ENCODE measurements at regions of chr19 and their contacts with region 1.

Region 1: DNA sequence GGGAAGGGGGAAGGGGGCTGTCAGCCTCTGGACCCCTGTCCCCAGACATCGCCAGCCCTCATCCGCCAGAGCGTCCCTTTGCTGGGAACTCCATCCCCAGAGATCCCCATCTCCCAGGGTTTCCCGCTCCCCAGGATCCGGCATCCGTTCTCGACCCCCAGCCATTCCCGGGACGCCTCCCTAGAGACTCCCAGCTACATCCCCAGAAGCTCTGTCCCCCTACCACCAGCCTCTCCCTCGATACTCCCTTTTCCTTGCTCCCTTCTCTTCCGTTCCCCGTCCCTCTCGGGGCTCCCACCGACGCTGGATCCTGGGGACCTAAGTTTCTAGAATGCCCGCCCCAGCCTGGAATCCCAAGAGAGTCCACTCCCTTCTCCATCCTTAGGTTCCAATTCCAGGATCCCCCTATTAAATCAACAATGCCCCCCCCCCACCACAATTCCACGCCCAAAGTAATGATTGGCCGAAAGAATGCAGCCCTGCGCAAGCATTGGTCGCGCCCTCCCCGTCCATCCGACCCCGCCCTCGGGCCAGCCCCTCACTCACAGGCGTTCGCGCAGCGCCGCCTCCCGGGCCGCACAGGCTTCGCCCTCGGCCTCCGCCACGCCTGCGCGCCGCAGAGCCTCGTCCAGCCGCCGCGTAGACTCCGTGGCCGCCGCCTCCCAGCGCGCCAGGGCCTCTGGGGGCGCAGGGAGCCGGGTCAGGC is 3.2 kb downstream of the CCDC194 start:
- DNase-seq: peak; percentile 88 to 95 (median 94)
- H3K4me3 ChIP-seq: peak overlapping the region in 2 of 4 donors; percentile 20 to 52
- H3K27ac ChIP-seq: peak overlapping the region in 2 of 5 donors; percentile 47
- H3K4me1 ChIP-seq: peaks cover 14 to 34% of the 10 kb centered on the region in 2 donors
- H3K27me3 ChIP-seq: no peaks in the 10 kb centered on the region
- CTCF ChIP-seq: peak; percentile 22 to 93 (median 57)
- POLR2A ChIP-seq: no peak

Region 2: DNA sequence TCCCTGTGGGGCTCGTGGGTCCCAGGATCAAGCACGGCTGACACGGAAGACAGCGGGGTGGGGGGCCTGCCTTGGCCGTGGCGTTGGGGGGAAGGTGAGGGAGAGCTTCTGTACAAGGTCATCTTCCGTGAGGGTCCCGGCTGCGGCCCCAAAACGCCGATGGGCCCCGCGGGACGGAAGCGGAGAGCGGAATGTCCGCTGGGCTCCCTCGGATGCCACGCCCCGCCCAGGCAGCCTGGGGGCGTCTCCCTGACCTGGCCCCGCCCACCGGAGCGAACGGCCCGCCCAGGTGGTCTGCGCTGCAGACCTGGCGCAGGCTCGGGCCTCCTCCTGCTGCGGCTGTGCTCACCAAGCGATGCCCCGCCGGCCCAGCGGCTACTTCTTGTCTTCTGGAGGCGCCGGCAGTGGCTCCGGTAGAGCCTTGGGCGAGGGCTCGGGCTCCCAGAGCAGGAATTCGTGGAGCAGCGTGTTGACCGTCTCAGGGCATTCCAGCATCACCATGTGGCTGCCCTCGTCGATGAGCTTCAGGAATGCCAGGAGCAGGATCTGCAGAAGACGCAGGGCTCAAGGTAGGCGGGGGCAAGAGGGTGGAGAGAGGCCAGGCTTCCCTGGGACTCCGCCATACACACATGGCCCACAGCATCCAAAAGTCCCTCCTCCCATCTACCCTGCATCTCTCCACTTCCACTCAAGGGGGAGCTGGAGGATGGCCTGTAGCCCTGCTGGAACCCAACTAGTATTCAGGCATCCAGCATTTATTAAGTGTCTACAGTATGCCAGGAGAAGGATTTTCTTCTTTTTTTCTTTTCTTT is 98.3 kb before region 1 on chr19:
- intact Hi-C with region 1: loop called in 1 of 2 experiments (anchors 10 kb)
- DNase-seq: peak; percentile 67 to 85 (median 76)
- H3K4me3 ChIP-seq: peak overlapping the region in 2 of 4 donors; percentile 10 to 54
- H3K27ac ChIP-seq: peak overlapping the region in 4 of 5 donors; percentile 3 to 84 (median 49)
- H3K4me1 ChIP-seq: peaks cover 7 to 24% of the 10 kb centered on the region in 2 donors
- H3K27me3 ChIP-seq: no peaks in the 10 kb centered on the region
- CTCF ChIP-seq: peak; percentile 13 to 89 (median 67)
- POLR2A ChIP-seq: no peak

Region 3: GRCh38 chr19:17305517-17306284 is 85.1 kb before region 1 on chr19 and contains the start of gene MRPL34:
- intact Hi-C with region 1: loop called in 1 of 2 experiments (anchors 10 kb)
- DNase-seq: peak; percentile 97 to 99 (median 99)
- H3K4me3 ChIP-seq: peak within 1 kb of the TSS; percentile 24 to 75 (median 67)
- H3K27ac ChIP-seq: peak within 1 kb of the TSS; percentile 81 to 97 (median 90)
- H3K4me1 ChIP-seq: peaks cover 42 to 56% of the 10 kb centered on the region in 2 donors
- H3K27me3 ChIP-seq: no peaks in the 10 kb centered on the region
- CTCF ChIP-seq: peak; percentile 70 to 95 (median 94)
- POLR2A ChIP-seq: peak; percentile 34 to 92
- total RNA-seq, gene MRPL34: 95.8 to 358 (median 165) TPM

Region 4: DNA sequence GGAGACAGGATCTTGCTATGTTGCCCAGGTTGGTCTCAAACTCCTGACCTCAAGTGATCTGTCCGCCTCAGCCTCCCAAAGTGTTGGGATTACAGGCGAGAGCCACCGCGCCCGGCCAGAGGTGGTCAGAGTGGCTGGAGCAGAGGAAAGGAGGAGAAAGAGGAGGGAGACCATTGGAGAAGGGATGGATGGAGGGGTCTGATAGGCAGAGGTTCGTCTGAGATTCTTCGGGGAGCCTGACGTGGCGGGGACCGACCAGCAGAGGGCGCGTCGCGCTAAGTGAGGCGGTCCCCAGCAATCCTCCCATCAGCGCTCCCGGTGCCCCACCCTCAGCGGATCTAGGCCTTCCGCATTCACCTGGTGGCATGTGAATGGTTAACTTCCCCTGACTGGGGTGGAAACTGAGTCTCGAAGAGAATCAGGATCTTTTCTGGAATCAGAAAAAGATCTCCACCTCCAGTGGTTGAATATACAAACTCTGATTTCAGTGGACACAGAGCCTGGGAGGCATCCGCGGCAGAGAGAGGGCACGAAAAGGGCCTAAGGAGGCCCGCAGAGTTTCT is 44.6 kb before region 1 on chr19:
- intact Hi-C with region 1: loop called (anchors 2 to 5 kb)
- DNase-seq: peak in 6 of 7 donors; percentile 68 to 89 (median 76)
- H3K4me3 ChIP-seq: no peak overlapping the region
- H3K27ac ChIP-seq: no peak overlapping the region
- H3K4me1 ChIP-seq: peaks cover 2 to 26% of the 10 kb centered on the region in 2 donors
- H3K27me3 ChIP-seq: no peaks in the 10 kb centered on the region
- CTCF ChIP-seq: peak; percentile 90 to 96 (median 94)
- POLR2A ChIP-seq: no peak

Region 5: GRCh38 chr19:17460372-17461230 is 69.8 kb after region 1 on chr19 and contains the start of gene NXNL1:
- intact Hi-C with region 1: loop called in 1 of 2 experiments (anchors 5 kb)
- DNase-seq: no peak
- H3K4me3 ChIP-seq: no peak within 1 kb of the TSS
- H3K27ac ChIP-seq: no peak within 1 kb of the TSS
- H3K4me1 ChIP-seq: no peaks in the 10 kb centered on the region
- H3K27me3 ChIP-seq: peaks cover 11% of the 10 kb centered on the region
- CTCF ChIP-seq: no peak
- POLR2A ChIP-seq: no peak
- total RNA-seq, gene NXNL1: 0.41 to 2.7 (median 0.92) TPM in 5 of 9 donors, not detected in the others